ENCODE measurements at regions of chr4 and their contacts with region 1.

Region 1: DNA sequence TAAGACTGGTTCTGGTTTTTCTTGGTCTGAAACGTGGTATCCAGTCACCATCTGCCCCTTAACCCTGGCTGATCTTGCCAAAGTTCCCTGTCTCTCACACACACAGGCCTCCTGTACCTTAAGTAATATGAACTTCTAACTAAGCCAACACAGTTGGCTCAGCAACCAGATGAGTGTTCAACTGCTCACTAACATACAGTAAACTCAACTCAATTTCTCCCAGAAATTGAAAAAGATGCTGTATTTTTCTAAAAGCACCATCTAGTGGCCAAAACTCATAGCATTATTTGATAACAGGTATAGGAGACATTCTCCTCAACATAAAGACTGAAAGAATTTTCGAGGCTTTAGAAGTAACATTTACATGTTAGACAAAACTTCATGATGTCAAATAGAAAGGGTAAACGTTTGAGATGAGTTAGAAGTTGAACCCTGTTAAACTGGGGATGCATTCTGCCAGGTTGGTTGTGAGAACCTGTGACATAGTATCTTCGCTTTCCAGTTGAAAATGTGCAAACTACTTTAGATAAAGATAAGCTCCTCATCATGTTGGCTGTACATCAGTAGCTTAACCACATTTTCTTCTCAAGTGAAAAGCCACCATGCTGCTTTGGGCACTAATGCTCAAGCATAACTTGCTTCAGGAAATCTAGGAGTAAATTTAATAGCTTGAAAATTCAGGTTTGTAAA is 31.2 kb downstream of the CCNI start:
- DNase-seq: peak; percentile 8
- ATAC-seq: peak; percentile 69
- H3K4me3 ChIP-seq: no peak overlapping the region
- H3K27ac ChIP-seq: no peak overlapping the region
- H3K4me1 ChIP-seq: no peaks in the 10 kb centered on the region
- H3K27me3 ChIP-seq: no peaks in the 10 kb centered on the region
- CTCF ChIP-seq: peak; percentile 51 to 71 (median 65)
- EP300 ChIP-seq: no peak
- POLR2A ChIP-seq: no peak
- RAD21 ChIP-seq: peak; percentile 50

Region 2: DNA sequence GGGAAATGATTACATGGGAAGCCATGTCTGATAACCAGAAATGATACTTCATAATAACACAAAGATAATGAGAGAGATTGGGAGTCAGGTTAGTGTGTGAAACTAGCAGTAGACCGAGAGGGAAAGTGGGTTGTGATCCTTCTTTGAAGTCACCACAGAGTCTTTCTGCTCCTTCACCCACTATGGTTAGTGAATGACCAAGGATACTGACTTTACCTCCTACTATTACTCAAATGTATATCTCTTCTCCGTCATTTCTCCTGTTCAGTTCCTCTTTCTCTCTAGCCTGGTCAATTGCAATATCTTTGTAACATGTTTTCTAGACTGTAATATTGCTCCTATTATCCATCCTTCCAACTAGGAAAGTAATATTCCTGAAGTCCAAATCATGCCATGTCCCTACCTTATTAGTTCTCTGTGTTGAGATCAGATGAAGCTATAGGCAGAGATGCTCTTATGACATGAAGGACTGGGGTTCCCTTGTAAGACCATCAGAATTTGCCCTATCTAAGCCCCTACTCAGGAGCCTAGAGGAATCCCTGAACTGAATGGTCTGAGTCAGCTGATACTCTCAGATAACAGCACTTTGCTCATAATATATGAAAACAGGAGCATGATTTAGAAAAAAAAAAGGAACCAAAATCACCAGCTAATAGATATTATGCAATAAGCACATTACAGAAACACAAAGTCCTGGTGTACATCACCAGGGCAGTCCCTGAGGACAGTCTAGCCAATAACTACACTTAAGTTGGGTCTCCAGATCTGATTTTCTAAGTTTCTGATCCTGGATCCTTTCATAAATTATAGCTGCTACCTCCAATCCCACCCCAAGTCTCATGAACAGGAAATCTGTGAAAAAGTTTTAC is 528.4 kb before region 1 on chr4:
- CTCF ChIA-PET with region 1: no interaction called
- POLR2A ChIA-PET with region 1: no interaction called
- RAD21 ChIA-PET with region 1: no interaction called
- SMC1A ChIA-PET with region 1: interaction called, 3 read pairs
- in situ Hi-C with region 1: loop called (anchors 5 kb)
- intact Hi-C with region 1: no loop called
- DNase-seq: peak; percentile 41
- ATAC-seq: peak; percentile 84
- H3K4me3 ChIP-seq: no peak overlapping the region
- H3K27ac ChIP-seq: no peak overlapping the region
- H3K4me1 ChIP-seq: peaks cover 7% of the 10 kb centered on the region; the same call in 1 of the 2 replicates
- H3K27me3 ChIP-seq: no peaks in the 10 kb centered on the region; a peak in 1 of 4 replicates
- CTCF ChIP-seq: no peak
- EP300 ChIP-seq: peak in 1 of 2 experiments; percentile 53; a peak in 1 of 4 replicates
- POLR2A ChIP-seq: no peak
- RAD21 ChIP-seq: no peak

Region 3: GRCh38 chr4:76949276-76950051 is 95.1 kb before region 1 on chr4 and contains the start of gene SEPTIN11:
- CTCF ChIA-PET with region 1: interaction called, 20 read pairs
- POLR2A ChIA-PET with region 1: interaction called, 3 read pairs
- RAD21 ChIA-PET with region 1: interaction called, 6 read pairs
- SMC1A ChIA-PET with region 1: interaction called, 5 read pairs
- in situ Hi-C with region 1: no loop called
- intact Hi-C with region 1: loop called (anchors 5 kb)
- DNase-seq: peak; percentile 55
- ATAC-seq: peak; percentile 86
- H3K4me3 ChIP-seq: peak within 1 kb of the TSS; percentile 95
- H3K27ac ChIP-seq: peak within 1 kb of the TSS; percentile 84
- H3K4me1 ChIP-seq: peaks cover 14% of the 10 kb centered on the region; the same call in 1 of the 2 replicates
- H3K27me3 ChIP-seq: no peaks in the 10 kb centered on the region
- CTCF ChIP-seq: no peak
- EP300 ChIP-seq: no peak
- POLR2A ChIP-seq: peak; percentile 97
- RAD21 ChIP-seq: no peak
- polyA plus RNA-seq, gene SEPTIN11: 24.7 to 27.1 TPM

Region 4: DNA sequence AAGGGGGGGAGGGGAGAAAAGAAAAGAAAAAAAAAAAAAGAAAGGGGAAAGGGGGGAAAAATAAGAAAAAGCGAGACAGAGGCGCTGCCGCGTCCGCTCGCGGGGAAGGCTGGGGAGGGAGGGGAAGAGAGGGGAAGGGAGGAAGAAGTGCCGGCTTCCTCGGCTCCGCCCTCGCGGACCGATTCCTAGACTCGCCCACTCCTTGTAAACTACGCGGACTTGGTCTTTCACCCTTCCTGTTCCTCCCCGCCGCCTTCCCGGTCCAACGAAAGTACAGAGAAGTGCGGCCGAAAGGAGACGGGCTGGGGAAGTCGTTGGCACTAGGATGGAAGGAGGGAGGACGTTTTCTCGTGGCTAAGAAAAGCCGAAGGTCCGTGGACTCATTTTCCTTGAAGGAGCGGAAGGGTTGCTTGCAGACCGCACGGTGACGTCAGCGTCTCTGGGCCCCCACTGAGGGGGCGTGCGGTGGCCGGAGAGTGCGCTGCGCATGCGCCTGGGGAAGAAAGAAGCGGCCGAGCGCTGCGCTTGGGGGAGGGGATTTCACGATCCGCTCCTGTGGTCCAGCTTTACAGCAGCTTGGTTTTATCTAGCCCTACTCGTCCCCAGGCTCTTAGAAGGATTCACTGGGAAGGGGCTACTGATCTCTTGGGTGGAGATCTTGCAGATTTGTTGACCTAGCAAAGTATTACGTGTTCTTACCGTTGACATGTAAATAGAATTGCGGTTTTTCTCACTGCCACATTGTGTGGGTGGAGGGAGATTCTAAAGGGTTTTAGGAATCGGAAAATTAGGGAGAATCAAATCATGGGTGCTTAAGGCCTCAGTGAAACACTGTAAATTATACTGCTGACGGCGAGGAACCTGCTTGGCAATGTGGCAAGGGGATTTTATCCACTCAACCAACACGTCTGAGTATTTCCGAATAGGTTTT is 31.5 kb after region 1 on chr4 and contains the start of gene CCNI:
- CTCF ChIA-PET with region 1: interaction called, 8 read pairs
- POLR2A ChIA-PET with region 1: interaction called, 4 read pairs
- RAD21 ChIA-PET with region 1: interaction called, 12 read pairs
- SMC1A ChIA-PET with region 1: interaction called, 3 read pairs
- in situ Hi-C with region 1: no loop called
- intact Hi-C with region 1: no loop called
- DNase-seq: peak; percentile 92
- ATAC-seq: peak; percentile 77
- H3K4me3 ChIP-seq: peak within 1 kb of the TSS; percentile 97
- H3K27ac ChIP-seq: peak within 1 kb of the TSS; percentile 100
- H3K4me1 ChIP-seq: 0 out of 2 replicates have a peak, but pooled peaks cover 3% of the 10 kb centered on the region
- H3K27me3 ChIP-seq: no peaks in the 10 kb centered on the region
- CTCF ChIP-seq: no peak
- EP300 ChIP-seq: peak; percentile 4 to 78; a peak in 3 of 4 replicates
- POLR2A ChIP-seq: peak; percentile 82
- RAD21 ChIP-seq: no peak
- polyA plus RNA-seq, gene CCNI: 72.4 to 82.4 TPM

Region 5: GRCh38 chr4:77120886-77121508 is 76.4 kb after region 1 on chr4:
- CTCF ChIA-PET with region 1: no interaction called
- POLR2A ChIA-PET with region 1: no interaction called
- RAD21 ChIA-PET with region 1: no interaction called
- SMC1A ChIA-PET with region 1: no interaction called
- in situ Hi-C with region 1: no loop called
- intact Hi-C with region 1: no loop called
- DNase-seq: no peak
- ATAC-seq: peak; percentile 79
- H3K4me3 ChIP-seq: no peak overlapping the region
- H3K27ac ChIP-seq: no peak overlapping the region
- H3K4me1 ChIP-seq: no peaks in the 10 kb centered on the region
- H3K27me3 ChIP-seq: no peaks in the 10 kb centered on the region
- CTCF ChIP-seq: peak; percentile 17 to 38 (median 22); a peak in 4 of 6 replicates
- EP300 ChIP-seq: no peak
- POLR2A ChIP-seq: no peak
- RAD21 ChIP-seq: peak; percentile 52; the same call in 1 of the 2 replicates

Region 6: GRCh38 chr4:77172336-77172735 is 127.7 kb after region 1 on chr4:
- CTCF ChIA-PET with region 1: no interaction called
- POLR2A ChIA-PET with region 1: no interaction called
- RAD21 ChIA-PET with region 1: no interaction called
- SMC1A ChIA-PET with region 1: no interaction called
- in situ Hi-C with region 1: no loop called
- intact Hi-C with region 1: no loop called
- DNase-seq: no peak
- ATAC-seq: no peak
- H3K4me3 ChIP-seq: no peak overlapping the region
- H3K27ac ChIP-seq: no peak overlapping the region
- H3K4me1 ChIP-seq: no peaks in the 10 kb centered on the region
- H3K27me3 ChIP-seq: no peaks in the 10 kb centered on the region
- CTCF ChIP-seq: no peak
- EP300 ChIP-seq: no peak
- POLR2A ChIP-seq: no peak
- RAD21 ChIP-seq: no peak

Measured in GM12878 (cell line).